ENCODE measurements at regions of chr22 and their contacts with region 1.

Region 1: GRCh38 chr22:31857247-31857646 is 87.1 kb upstream of the YWHAH start:
- DNase-seq: no peak
- CTCF ChIP-seq: no peak

Region 2: DNA sequence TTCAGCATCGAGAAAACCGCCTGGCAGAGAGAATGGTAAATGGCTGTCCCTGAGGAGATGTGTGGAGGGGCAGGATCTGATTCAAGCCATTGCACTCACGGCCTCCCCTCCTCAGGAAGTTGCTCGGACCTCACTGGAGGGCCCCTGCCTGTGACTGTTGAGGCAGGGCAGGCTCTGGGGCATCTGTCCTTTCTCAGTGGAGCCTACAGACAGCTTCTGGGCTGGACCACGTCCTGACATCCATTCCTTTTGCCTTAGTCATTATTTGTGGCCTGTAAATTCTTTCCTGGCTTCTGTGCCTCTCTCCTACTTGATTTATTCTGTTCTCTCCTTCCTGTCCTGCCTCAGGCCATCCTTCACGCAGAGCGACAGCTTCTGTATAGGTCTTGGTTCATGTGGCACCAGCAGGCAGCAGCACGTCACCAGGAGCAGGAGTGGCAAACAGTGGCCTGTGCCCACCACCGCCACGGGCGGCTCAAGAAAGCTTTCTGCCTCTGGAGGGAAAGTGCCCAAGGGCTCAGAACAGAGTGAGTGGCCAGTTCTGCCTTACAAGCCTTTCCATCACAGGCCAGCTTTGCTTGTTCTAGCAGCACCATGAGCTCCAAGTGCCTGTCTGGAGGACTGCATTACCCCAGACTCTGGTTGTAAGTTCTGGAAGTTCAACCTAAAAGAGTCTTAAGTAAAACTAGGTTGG is 254.8 kb before region 1 on chr22:
- CTCF ChIA-PET with region 1: no interaction called
- POLR2A ChIA-PET with region 1: no interaction called
- DNase-seq: no peak
- CTCF ChIP-seq: no peak

Region 3: DNA sequence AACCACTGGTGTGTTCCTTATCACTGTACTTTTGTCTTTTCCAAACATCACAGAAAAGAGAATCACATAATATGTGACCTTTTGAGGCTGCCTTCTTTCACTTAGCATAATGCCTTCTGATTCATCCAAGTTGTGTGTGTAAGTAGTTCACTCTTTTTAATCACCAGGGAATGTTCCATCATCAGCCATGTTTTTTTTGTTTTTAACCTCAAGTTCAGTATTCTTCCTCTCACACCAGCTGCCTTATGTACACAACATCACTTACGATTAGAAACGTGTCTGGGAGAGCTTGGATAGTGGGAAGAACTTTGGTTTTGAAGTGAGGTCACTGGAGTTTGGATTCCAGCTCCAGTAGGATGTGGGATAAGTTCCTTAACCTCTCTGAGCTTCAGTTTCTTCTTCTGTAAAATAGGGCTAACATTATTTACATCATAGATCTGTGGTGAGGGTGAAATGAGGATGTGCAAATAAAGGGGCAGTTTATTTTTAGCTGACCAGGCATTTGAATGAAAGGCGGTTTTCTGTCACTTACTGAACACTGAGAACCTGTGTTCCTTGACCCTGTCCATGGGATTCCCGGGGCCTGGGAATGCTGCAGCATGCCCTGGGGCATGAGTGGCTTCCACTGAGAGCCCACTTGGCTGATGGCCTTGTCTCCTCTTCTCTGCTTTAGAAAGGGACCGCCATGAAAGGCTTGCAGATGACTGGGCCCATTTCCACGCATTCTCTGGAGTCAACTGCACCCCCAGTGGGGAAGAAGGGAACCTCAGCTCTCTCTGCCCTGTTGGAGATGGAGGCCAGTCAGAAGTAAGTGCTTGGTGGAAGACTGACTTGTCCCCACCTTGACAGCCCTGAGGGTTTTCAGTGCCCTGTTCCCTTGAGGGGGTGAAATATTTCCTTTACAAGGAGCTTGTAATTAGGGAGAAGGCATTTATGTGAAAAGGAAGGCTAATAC is 10.8 kb before region 1 on chr22:
- CTCF ChIA-PET with region 1: interaction called, 18 read pairs
- POLR2A ChIA-PET with region 1: no interaction called
- DNase-seq: peak; percentile 51
- CTCF ChIP-seq: peak; percentile 32

Region 4: DNA sequence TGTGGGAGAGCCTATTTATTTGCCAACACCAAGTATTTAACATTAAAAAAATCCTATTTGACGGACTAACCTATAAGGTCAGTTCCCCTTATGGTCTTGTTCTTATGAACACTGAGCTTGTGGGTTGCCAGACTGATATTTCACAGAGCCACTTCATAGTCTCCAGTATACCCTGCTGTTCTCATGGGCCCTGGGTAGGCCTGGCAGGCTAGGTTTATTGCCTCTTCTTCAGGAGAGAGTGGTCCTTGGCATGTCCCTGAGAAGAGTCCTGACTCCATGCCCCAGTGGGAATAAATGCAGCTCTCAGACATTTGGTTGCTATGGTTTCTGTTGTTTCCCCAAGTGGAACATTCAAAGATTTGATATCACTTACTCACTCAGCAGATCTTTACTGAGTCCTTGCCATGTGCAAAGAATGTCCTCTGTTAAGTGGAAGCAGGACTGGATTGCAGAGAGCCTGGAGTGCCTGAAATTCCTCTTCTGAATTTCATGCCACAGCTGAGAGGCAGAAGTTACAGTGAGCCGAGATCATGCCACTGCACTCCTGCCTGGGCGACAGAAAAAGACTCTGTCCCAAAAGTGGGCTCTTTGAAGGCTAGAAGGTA is 201.5 kb after region 1 on chr22:
- CTCF ChIA-PET with region 1: no interaction called
- POLR2A ChIA-PET with region 1: no interaction called
- DNase-seq: no peak
- CTCF ChIP-seq: no peak